Activated CD4-positive, alpha-beta T cell treated with anti-CD3 and anti-CD28 coated beads for 36 hours (primary cell): ENCODE measurements at regions of chr3 and their contacts with region 1.

Region 1: DNA sequence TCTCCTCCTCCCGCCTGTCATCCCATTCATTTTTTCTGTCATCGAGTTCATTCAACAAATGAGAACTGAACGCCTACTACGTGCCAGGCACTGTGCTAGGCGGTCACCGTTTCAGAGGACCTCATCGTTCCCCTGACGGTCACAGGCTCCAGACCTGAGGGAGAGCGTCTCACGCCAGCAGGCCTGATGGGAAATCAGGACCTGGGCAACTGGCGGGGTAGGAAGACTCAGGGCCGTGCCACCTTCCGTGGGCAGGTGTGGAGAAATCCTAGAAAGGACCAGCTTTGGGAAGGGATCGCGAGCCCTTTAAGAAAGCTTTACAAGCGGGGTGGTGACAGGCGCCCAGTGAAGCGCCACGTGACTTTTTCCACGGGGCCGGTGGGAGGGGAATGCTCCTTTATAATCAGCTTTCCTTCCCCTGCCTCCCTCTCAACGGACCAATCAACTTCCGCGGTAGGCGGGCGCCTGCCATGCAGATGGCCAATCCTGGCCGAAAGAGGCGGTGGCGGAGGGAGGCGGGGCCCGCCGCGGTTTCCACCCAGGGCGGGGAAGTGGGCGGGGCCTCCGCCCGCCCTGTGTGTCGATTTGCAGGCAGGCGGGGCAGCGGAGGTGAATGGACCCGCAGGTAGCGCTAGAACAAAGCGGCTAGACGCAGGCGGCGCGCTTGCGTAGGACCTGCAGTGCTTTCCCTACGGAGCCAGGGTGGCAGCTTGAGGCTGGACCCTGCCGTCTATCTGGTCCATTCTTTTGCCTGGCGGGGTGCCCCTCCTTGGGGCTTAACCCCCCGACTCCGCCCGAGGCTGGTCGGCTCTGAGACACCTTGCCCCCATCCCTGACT is 816 bp upstream of the DUSP7 start:
- DNase-seq: peak; percentile 100
- ATAC-seq: peak; percentile 81
- H3K4me3 Mint-ChIP-seq: peak overlapping the region; percentile 85
- H3K27ac Mint-ChIP-seq: peak overlapping the region; percentile 93
- H3K4me1 Mint-ChIP-seq: peaks cover 30% of the 10 kb centered on the region
- H3K27me3 Mint-ChIP-seq: no peaks in the 10 kb centered on the region

Region 2: DNA sequence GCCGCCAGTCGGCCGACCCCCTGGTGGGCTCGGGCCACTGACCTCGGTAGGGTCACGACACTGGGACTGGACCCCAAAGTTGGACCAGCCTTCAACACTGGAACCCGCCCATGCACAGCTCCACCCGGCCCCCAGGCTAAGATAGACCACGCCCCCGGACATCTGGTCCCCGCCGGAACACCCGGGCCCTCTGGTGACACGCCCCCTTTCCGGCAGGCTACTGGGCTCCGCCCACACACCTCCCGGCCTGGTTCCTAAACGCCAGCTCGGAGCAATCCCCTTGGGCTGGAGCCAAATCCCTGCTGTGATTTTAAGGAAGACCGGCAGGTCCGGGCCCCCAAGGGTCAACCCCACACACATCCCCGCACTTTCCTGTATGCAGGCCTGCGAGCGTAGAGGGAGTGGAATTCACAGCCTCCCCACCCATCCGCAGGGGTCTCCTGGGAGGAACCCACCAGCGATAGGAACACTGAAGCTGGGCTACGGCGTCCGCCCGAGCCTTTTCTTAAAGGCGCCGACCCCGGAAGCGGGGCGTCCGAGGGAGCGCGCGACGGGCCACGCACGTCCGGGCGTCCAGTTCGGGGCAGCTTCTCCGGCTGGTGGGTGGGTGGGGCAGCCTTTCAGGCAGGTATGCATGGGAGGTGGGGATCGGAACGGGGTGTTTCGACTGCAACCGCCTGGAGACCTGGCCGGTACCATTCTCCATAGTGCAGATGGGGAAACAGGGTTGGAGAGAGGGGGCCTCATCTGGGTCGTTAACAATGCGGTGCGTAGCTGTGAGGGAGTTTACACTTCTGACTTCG is 1488.0 kb before region 1 on chr3 and contains the start of gene HEMK1:
- CTCF ChIA-PET with region 1: no interaction called
- POLR2A ChIA-PET with region 1: no interaction called
- intact Hi-C with region 1: loop called in 1 of 2 experiments (anchors 5 kb)
- DNase-seq: peak; percentile 98
- ATAC-seq: peak; percentile 33
- H3K4me3 Mint-ChIP-seq: peak within 1 kb of the TSS; percentile 100
- H3K27ac Mint-ChIP-seq: peak within 1 kb of the TSS; percentile 99
- H3K4me1 Mint-ChIP-seq: peaks cover 59% of the 10 kb centered on the region
- H3K27me3 Mint-ChIP-seq: no peaks in the 10 kb centered on the region
- total RNA-seq, gene HEMK1: 61.6 to 77.7 TPM

Region 3: DNA sequence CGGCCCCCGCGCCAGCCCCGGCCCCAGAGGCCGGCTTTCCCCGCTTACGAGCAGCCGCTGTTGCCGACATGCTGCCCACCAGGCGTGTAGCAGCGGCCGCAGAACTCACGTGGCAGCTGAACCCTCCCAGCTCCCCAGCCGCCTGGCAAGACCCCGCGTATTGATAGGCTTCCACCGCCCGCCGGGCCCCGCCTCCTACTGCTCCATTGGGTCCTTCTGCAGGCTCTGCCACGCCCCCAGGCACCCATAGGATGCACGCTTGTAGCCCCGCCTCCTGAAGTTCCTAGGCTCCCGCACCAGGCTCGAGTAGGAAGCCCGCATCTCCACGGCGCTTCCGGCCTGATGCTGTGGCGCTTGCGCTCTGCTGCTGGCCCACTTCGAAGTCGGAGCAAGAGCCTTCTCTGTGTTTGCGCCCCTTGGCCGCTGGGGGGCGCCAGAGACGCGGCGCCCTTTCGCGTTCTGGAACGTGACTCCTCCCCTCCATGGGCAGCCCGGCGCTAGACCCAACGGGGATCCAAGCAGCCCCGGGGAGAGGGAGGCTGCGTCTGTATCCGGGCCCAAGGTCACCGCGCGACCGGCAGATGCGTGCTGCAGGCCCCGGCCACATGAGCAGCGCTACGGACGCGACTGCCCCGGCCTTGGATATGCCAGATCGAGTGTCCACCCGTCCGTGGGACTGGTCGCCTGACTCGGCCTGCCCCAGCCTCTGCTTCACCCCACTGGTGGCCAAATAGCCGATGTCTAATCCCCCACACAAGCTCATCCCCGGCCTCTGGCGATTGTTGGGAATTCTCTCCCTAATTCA is 115.2 kb before region 1 on chr3 and contains the starts of genes PARP3 and RRP9:
- CTCF ChIA-PET with region 1: interaction called, 4 read pairs
- POLR2A ChIA-PET with region 1: interaction called, 3 read pairs
- intact Hi-C with region 1: loop called (anchors 1 to 2 kb)
- DNase-seq: peak; percentile 100
- ATAC-seq: peak; percentile 95
- H3K4me3 Mint-ChIP-seq: peak within 1 kb of the TSS; percentile 84
- H3K27ac Mint-ChIP-seq: peak within 1 kb of the TSS; percentile 83
- H3K4me1 Mint-ChIP-seq: peaks cover 33% of the 10 kb centered on the region
- H3K27me3 Mint-ChIP-seq: no peaks in the 10 kb centered on the region
- total RNA-seq, gene PARP3: 10.6 to 12.2 TPM
- total RNA-seq, gene RRP9: 38.2 to 39.3 TPM

Region 4: DNA sequence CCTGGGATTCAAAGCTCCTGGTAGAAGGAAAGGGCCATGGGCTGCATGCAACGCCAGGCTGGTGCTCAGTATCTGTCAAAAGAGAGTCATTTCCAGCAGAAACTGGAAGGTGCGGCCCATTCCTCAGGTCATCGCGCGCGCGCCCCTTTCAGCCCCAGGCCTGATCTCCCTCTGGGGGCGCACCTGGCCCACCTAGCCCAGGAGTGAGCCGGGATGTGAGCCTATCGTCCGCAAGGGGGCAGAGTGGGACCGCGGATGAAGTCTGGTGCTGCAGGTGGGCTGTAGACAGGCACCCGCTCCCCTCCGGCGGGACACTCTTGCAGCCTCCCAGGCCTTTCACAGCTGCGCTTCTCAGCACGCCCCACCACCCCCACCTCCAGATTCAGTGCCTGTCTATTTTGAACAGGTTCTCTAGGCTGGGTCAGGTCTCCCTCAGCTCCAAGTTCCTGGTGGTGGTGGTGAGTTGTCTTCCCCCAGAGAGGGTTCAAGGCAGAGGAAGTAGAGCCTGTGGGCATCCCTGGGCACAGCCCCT is 55.7 kb before region 1 on chr3:
- CTCF ChIA-PET with region 1: interaction called, 30 read pairs
- POLR2A ChIA-PET with region 1: interaction called, 3 read pairs
- intact Hi-C with region 1: loop called (anchors 1 to 2 kb)
- DNase-seq: peak; percentile 91
- ATAC-seq: peak; percentile 97
- H3K4me3 Mint-ChIP-seq: no peak overlapping the region
- H3K27ac Mint-ChIP-seq: no peak overlapping the region
- H3K4me1 Mint-ChIP-seq: peaks cover 16% of the 10 kb centered on the region
- H3K27me3 Mint-ChIP-seq: no peaks in the 10 kb centered on the region

Region 5: GRCh38 chr3:52197842-52198668 is 140.9 kb after region 1 on chr3 and contains the start of gene ALAS1:
- CTCF ChIA-PET with region 1: no interaction called
- POLR2A ChIA-PET with region 1: no interaction called
- intact Hi-C with region 1: loop called in 1 of 2 experiments (anchors 1 kb)
- DNase-seq: peak; percentile 97
- ATAC-seq: peak; percentile 95
- H3K4me3 Mint-ChIP-seq: peak within 1 kb of the TSS; percentile 96
- H3K27ac Mint-ChIP-seq: peak within 1 kb of the TSS; percentile 91
- H3K4me1 Mint-ChIP-seq: peaks cover 48% of the 10 kb centered on the region
- H3K27me3 Mint-ChIP-seq: no peaks in the 10 kb centered on the region
- total RNA-seq, gene ALAS1: 52.8 to 68.7 TPM

Region 6: GRCh38 chr3:52455283-52456168 is 398.3 kb after region 1 on chr3 and contains the start of gene NISCH:
- CTCF ChIA-PET with region 1: no interaction called
- POLR2A ChIA-PET with region 1: no interaction called
- intact Hi-C with region 1: loop called in 1 of 2 experiments (anchors 1 kb)
- DNase-seq: peak; percentile 98
- ATAC-seq: peak; percentile 88
- H3K4me3 Mint-ChIP-seq: peak within 1 kb of the TSS; percentile 96
- H3K27ac Mint-ChIP-seq: peak within 1 kb of the TSS; percentile 95
- H3K4me1 Mint-ChIP-seq: peaks cover 36% of the 10 kb centered on the region
- H3K27me3 Mint-ChIP-seq: no peaks in the 10 kb centered on the region
- total RNA-seq, gene NISCH: 61.4 to 68.9 TPM